CD4-positive, alpha-beta T cell (primary cell): ENCODE measurements at regions of chr14 and their contacts with region 1.

Region 1: DNA sequence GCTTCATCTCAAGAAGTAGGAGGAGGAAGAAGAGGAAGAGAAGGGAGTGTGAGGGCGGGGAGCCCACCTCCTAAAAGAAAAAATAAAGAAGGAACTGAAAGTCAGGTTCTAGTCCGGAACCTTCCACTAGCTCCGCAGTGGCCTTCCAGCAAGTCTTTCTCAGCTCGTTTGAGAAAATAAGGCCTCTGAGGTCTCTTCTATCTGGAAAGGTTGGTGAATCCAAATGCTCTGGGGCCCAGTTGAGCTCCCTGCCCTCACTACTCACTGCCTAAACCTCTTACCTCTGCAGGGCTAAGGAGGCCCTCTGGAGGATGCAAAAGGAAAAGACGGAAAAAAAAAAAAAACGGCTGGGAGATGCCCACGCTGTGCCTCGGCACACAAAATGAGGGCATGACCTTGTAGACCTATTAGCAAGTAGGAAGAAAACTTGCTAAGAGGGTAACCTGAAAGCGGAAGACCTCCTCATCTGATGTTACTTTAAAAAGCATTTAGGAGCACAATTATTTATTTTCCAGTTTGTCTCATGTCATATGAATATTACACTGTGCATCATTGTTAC is 35.9 kb downstream of the FBLN5 start:
- DNase-seq: peak in 13 of 14 experiments; percentile 18 to 80 (median 44)
- ATAC-seq: peak; percentile 99
- H3K4me3 ChIP-seq: no peak overlapping the region
- H3K4me3 Mint-ChIP-seq: no peak overlapping the region
- H3K27ac ChIP-seq: no peak overlapping the region
- H3K27ac Mint-ChIP-seq: peak overlapping the region; percentile 53
- H3K4me1 ChIP-seq: peaks cover 4% of the 10 kb centered on the region
- H3K4me1 Mint-ChIP-seq: peaks cover 24% of the 10 kb centered on the region
- H3K27me3 ChIP-seq: no peaks in the 10 kb centered on the region
- H3K27me3 Mint-ChIP-seq: no peaks in the 10 kb centered on the region
- CTCF ChIP-seq: peak; percentile 73

Region 2: GRCh38 chr14:91649930-91650329 is 261.6 kb before region 1 on chr14:
- CTCF ChIA-PET with region 1: interaction called, 8 read pairs
- POLR2A ChIA-PET with region 1: interaction called, 3 read pairs
- intact Hi-C with region 1: loop called (anchors 1 kb)
- DNase-seq: peak in 5 of 14 experiments; percentile 11 to 54 (median 49)
- ATAC-seq: peak; percentile 76
- H3K4me3 ChIP-seq: no peak overlapping the region
- H3K4me3 Mint-ChIP-seq: no peak overlapping the region
- H3K27ac ChIP-seq: no peak overlapping the region
- H3K27ac Mint-ChIP-seq: no peak overlapping the region
- H3K4me1 ChIP-seq: no peaks in the 10 kb centered on the region
- H3K4me1 Mint-ChIP-seq: no peaks in the 10 kb centered on the region
- H3K27me3 ChIP-seq: no peaks in the 10 kb centered on the region
- H3K27me3 Mint-ChIP-seq: no peaks in the 10 kb centered on the region
- CTCF ChIP-seq: peak; percentile 79

Region 3: DNA sequence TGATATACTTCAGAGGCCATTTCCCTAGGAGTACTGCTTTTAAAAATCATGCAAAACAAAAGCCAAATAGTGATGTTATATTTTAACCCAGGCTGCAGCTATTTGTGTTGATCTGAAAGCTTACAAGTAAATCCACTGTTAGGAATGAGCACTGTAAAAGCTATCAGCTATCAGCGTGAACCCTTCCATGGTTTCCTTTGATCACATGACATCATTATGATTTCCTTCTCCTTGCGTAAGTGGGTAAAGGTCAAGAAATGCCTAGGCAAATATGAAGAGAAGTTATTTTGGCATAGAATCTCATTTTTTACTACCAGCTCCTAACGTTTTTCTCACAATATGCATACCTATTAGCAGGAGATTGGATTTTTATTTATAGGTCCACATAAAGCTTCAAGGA is 131.1 kb before region 1 on chr14:
- CTCF ChIA-PET with region 1: interaction called, 12 read pairs
- POLR2A ChIA-PET with region 1: no interaction called
- intact Hi-C with region 1: no loop called
- DNase-seq: no peak
- ATAC-seq: no peak
- H3K4me3 ChIP-seq: no peak overlapping the region
- H3K4me3 Mint-ChIP-seq: no peak overlapping the region
- H3K27ac ChIP-seq: no peak overlapping the region
- H3K27ac Mint-ChIP-seq: no peak overlapping the region
- H3K4me1 ChIP-seq: no peaks in the 10 kb centered on the region
- H3K4me1 Mint-ChIP-seq: no peaks in the 10 kb centered on the region
- H3K27me3 ChIP-seq: no peaks in the 10 kb centered on the region
- H3K27me3 Mint-ChIP-seq: no peaks in the 10 kb centered on the region
- CTCF ChIP-seq: no peak

Region 4: DNA sequence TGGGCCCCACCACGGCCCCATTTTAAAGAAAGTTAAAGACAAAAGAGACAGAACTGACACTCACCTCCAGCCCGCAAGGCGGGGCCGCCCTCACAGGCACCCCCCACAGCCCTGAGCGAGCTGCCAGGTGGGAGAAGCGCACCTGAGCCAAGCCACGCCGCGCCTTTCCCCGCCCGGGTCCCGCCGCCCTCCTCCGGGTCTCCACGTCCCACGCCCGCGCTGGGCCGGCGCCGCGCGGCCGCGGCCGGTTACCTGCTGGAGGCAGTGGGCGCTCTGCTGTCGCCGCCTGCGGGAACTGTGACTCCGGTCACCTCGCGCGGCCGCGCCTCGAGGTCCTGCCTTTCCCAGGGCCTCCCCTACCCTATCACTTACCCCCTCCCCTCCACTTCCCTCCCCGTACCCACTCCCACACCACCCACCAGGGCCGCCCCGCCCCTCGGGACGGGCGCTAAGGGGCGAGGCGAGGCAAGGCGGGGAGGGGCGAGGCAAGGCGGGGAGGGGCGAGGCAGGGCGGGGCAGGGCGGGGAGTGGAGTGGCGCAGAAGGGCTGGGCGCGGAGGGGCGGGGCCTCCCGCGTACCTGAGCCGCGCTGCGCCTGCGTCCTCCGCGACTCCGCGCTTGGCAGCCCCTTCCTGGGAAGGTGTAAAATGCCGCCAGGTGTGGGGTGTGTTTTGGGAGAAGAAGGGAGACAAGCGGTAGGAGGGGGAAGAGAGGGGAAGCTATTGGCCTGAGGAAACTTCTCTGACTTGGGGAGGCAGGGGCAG is 75.3 kb before region 1 on chr14:
- CTCF ChIA-PET with region 1: interaction called, 12 read pairs
- POLR2A ChIA-PET with region 1: interaction called, 9 read pairs
- intact Hi-C with region 1: loop called in 1 of 2 experiments (anchors 5 kb)
- DNase-seq: peak; percentile 78 to 97 (median 90)
- ATAC-seq: peak; percentile 95
- H3K4me3 ChIP-seq: peak overlapping the region; percentile 63
- H3K4me3 Mint-ChIP-seq: peak overlapping the region; percentile 93
- H3K27ac ChIP-seq: peak overlapping the region; percentile 43 to 59
- H3K27ac Mint-ChIP-seq: peak overlapping the region; percentile 90
- H3K4me1 ChIP-seq: peaks cover 33% of the 10 kb centered on the region
- H3K4me1 Mint-ChIP-seq: peaks cover 83% of the 10 kb centered on the region
- H3K27me3 ChIP-seq: no peaks in the 10 kb centered on the region
- H3K27me3 Mint-ChIP-seq: no peaks in the 10 kb centered on the region
- CTCF ChIP-seq: no peak

Region 5: GRCh38 chr14:91872517-91873470 is 38.8 kb before region 1 on chr14:
- CTCF ChIA-PET with region 1: interaction called, 8 read pairs
- POLR2A ChIA-PET with region 1: interaction called, 97 read pairs
- intact Hi-C with region 1: loop called in 1 of 2 experiments (anchors 2 kb)
- DNase-seq: peak; percentile 52 to 85 (median 73)
- ATAC-seq: peak; percentile 45
- H3K4me3 ChIP-seq: peak overlapping the region; percentile 53
- H3K4me3 Mint-ChIP-seq: peak overlapping the region; percentile 90
- H3K27ac ChIP-seq: peak overlapping the region; percentile 86 to 97
- H3K27ac Mint-ChIP-seq: peak overlapping the region; percentile 95
- H3K4me1 ChIP-seq: peaks cover 100% of the 10 kb centered on the region
- H3K4me1 Mint-ChIP-seq: peaks cover 95% of the 10 kb centered on the region
- H3K27me3 ChIP-seq: no peaks in the 10 kb centered on the region
- H3K27me3 Mint-ChIP-seq: no peaks in the 10 kb centered on the region
- CTCF ChIP-seq: no peak